ENCODE measurements at regions of chr2 and their contacts with region 1.

Region 1: DNA sequence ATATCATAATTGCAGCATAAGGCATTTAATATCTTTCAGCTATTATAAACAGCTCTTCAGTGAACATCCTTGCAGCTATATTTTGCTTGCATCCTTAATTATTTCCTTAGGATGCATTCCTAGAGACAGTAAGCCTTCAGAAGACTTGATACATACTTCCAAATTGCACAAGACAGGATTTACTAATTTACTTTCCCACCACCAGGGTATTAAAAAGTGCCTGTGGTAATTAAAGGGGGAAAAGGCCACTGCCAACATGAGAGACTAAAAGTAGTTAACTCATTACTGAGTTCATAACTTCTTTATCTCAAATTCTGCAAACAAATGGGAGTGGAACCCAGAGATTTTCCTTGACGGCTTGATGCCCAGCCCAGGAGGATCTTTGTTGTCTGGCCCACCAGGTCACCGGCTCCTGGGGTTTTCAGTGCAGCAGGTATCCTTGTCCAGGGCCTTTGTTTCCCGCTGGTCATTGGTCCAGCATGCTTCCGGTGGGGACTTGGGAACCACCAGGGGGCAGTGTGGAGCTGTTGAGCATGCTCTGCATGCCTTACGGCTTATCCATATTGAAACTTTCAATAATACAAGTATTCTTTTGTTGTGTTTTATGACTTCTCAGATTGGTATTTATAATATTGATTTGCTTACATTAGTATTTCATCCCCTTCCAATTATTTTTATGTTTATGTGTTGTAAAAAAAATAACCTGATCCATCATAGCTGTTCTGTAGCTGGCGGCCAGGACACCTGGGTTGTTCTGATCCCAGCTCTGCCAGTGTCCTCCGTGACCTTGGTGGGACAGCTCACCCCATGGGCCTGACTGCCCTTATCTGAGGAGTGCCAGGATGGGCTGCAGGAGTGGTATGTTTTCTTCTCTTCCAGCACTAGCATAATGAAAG is 61.4 kb downstream of the TGOLN2 start:
- DNase-seq: peak; percentile 80
- H3K4me3 Mint-ChIP-seq: no peak overlapping the region
- H3K27ac Mint-ChIP-seq: no peak overlapping the region
- H3K4me1 Mint-ChIP-seq: no peaks in the 10 kb centered on the region
- H3K27me3 Mint-ChIP-seq: no peaks in the 10 kb centered on the region

Region 2: DNA sequence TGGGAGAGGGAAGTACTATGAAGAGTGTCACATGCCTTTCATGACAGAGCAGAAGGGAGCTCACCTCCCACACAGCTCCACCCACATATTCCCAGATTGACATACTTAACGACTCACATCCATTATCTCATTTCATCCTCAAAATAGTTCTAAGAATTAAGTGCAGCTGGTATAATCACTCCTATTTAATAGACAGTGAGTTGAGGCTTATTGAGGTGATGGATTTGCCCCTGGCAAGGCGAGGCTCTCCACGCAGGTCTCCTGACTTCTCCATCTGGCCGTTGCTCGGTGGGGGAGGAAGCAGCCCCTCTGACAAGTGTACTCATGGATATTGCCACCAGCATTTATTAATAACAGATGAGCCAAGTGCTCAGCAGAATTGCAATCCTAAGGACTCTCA is 20.0 kb before region 1 on chr2:
- CTCF ChIA-PET with region 1: interaction called, 10 read pairs
- POLR2A ChIA-PET with region 1: no interaction called
- intact Hi-C with region 1: no loop called
- DNase-seq: no peak
- H3K4me3 Mint-ChIP-seq: no peak overlapping the region
- H3K27ac Mint-ChIP-seq: no peak overlapping the region
- H3K4me1 Mint-ChIP-seq: no peaks in the 10 kb centered on the region
- H3K27me3 Mint-ChIP-seq: peaks cover 7% of the 10 kb centered on the region

Region 3: GRCh38 chr2:85255813-85256594 is 10.4 kb before region 1 on chr2:
- CTCF ChIA-PET with region 1: interaction called, 12 read pairs
- POLR2A ChIA-PET with region 1: no interaction called
- intact Hi-C with region 1: no loop called
- DNase-seq: no peak
- H3K4me3 Mint-ChIP-seq: no peak overlapping the region
- H3K27ac Mint-ChIP-seq: no peak overlapping the region
- H3K4me1 Mint-ChIP-seq: no peaks in the 10 kb centered on the region
- H3K27me3 Mint-ChIP-seq: no peaks in the 10 kb centered on the region

Region 4: GRCh38 chr2:85282914-85283313 is 16.5 kb after region 1 on chr2:
- CTCF ChIA-PET with region 1: interaction called, 39 read pairs
- POLR2A ChIA-PET with region 1: interaction called, 3 read pairs
- intact Hi-C with region 1: loop called (anchors 1 kb)
- DNase-seq: no peak
- H3K4me3 Mint-ChIP-seq: no peak overlapping the region
- H3K27ac Mint-ChIP-seq: no peak overlapping the region
- H3K4me1 Mint-ChIP-seq: peaks cover 6% of the 10 kb centered on the region
- H3K27me3 Mint-ChIP-seq: no peaks in the 10 kb centered on the region

Region 5: GRCh38 chr2:85288244-85288725 is 21.9 kb after region 1 on chr2:
- CTCF ChIA-PET with region 1: interaction called, 39 read pairs
- POLR2A ChIA-PET with region 1: no interaction called
- intact Hi-C with region 1: loop called (anchors 1 kb)
- DNase-seq: no peak
- H3K4me3 Mint-ChIP-seq: no peak overlapping the region
- H3K27ac Mint-ChIP-seq: no peak overlapping the region
- H3K4me1 Mint-ChIP-seq: peaks cover 16% of the 10 kb centered on the region
- H3K27me3 Mint-ChIP-seq: no peaks in the 10 kb centered on the region

Measured in activated CD4-positive, alpha-beta memory T cell treated with anti-CD3 and anti-CD28 coated beads for 36 hours (primary cell).